ENCODE measurements at regions of chr13 and their contacts with region 1.

Region 1: GRCh38 chr13:100715604-100716003 is 41.0 kb upstream of the TMTC4 start:
- DNase-seq: no peak
- ATAC-seq: no peak
- H3K4me3 ChIP-seq: no peak overlapping the region
- H3K27ac ChIP-seq: no peak overlapping the region
- H3K4me1 ChIP-seq: no peaks in the 10 kb centered on the region
- H3K27me3 ChIP-seq: no peaks in the 10 kb centered on the region

Region 2: GRCh38 chr13:100650326-100650725 is 65.3 kb before region 1 on chr13:
- intact Hi-C with region 1: no loop called
- DNase-seq: no peak
- ATAC-seq: no peak
- H3K4me3 ChIP-seq: no peak overlapping the region
- H3K27ac ChIP-seq: no peak overlapping the region
- H3K4me1 ChIP-seq: no peaks in the 10 kb centered on the region
- H3K27me3 ChIP-seq: no peaks in the 10 kb centered on the region

Region 3: DNA sequence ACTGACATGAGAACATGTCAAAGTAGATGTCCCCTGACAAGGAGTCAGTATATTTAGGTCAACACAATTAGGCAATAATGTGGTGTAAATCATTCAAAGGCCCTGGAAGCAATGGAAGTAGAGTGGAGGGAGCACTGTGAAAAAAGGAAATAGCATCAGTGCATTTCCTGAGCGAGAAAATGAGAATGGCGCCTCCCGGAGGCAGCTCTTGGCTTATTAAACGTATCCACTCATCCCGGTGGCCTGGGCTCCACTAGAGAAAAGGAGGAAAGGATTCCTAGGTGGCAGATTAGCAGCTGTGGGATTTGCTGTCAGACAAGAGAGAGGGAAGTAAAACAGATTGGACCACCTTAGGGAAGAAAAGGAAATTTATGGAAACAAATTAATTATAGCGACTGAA is 132.7 kb after region 1 on chr13:
- intact Hi-C with region 1: no loop called
- DNase-seq: no peak
- ATAC-seq: no peak
- H3K4me3 ChIP-seq: no peak overlapping the region
- H3K27ac ChIP-seq: no peak overlapping the region
- H3K4me1 ChIP-seq: no peaks in the 10 kb centered on the region
- H3K27me3 ChIP-seq: no peaks in the 10 kb centered on the region

Region 4: GRCh38 chr13:100987953-100988352 is 272.3 kb after region 1 on chr13:
- intact Hi-C with region 1: loop called in 1 of 4 experiments (anchors 5 kb)
- DNase-seq: no peak
- ATAC-seq: no peak
- H3K4me3 ChIP-seq: no peak overlapping the region
- H3K27ac ChIP-seq: no peak overlapping the region
- H3K4me1 ChIP-seq: peaks cover 1% of the 10 kb centered on the region
- H3K27me3 ChIP-seq: no peaks in the 10 kb centered on the region